Activated CD4-positive, alpha-beta T cell treated with anti-CD3 and anti-CD28 coated beads for 36 hours (primary cell): ENCODE measurements at regions of chr3 and their contacts with region 1.

Region 1: GRCh38 chr3:81910244-81910852 is 148.9 kb upstream of the GBE1 start:
- DNase-seq: peak; percentile 17
- ATAC-seq: peak; percentile 49
- H3K4me3 Mint-ChIP-seq: no peak overlapping the region
- H3K27ac Mint-ChIP-seq: no peak overlapping the region
- H3K4me1 Mint-ChIP-seq: no peaks in the 10 kb centered on the region
- H3K27me3 Mint-ChIP-seq: peaks cover 5% of the 10 kb centered on the region

Region 2: GRCh38 chr3:81888914-81889557 is 21.3 kb before region 1 on chr3:
- CTCF ChIA-PET with region 1: interaction called, 10 read pairs
- POLR2A ChIA-PET with region 1: no interaction called
- intact Hi-C with region 1: no loop called
- DNase-seq: no peak
- ATAC-seq: no peak
- H3K4me3 Mint-ChIP-seq: no peak overlapping the region
- H3K27ac Mint-ChIP-seq: no peak overlapping the region
- H3K4me1 Mint-ChIP-seq: no peaks in the 10 kb centered on the region
- H3K27me3 Mint-ChIP-seq: no peaks in the 10 kb centered on the region

Region 3: DNA sequence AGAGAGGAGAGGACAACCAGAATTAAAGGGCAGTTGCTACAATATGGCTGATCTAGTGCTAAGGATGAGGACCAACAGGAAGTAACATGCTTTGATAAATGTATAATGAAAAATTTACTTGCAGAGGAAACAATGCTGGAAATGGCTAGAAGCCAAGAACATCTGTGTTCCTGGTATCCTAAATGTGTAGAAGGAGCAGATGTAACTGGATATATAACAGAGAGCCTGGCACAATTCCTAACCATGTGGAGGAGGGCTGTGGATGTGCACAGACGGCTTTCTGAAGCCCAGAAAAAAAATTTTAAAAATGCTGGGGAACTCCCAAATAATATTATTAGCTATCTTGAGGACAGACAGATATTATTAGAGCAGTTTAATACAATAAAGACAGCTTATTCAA is 10.5 kb after region 1 on chr3:
- CTCF ChIA-PET with region 1: interaction called, 16 read pairs
- POLR2A ChIA-PET with region 1: no interaction called
- intact Hi-C with region 1: no loop called
- DNase-seq: no peak
- ATAC-seq: no peak
- H3K4me3 Mint-ChIP-seq: no peak overlapping the region
- H3K27ac Mint-ChIP-seq: no peak overlapping the region
- H3K4me1 Mint-ChIP-seq: no peaks in the 10 kb centered on the region
- H3K27me3 Mint-ChIP-seq: peaks cover 7% of the 10 kb centered on the region

Region 4: GRCh38 chr3:82133070-82133606 is 222.8 kb after region 1 on chr3:
- CTCF ChIA-PET with region 1: no interaction called
- POLR2A ChIA-PET with region 1: no interaction called
- intact Hi-C with region 1: loop called in 1 of 2 experiments (anchors 5 kb)
- DNase-seq: peak; percentile 68
- ATAC-seq: peak; percentile 61
- H3K4me3 Mint-ChIP-seq: no peak overlapping the region
- H3K27ac Mint-ChIP-seq: no peak overlapping the region
- H3K4me1 Mint-ChIP-seq: no peaks in the 10 kb centered on the region
- H3K27me3 Mint-ChIP-seq: peaks cover 2% of the 10 kb centered on the region